ENCODE measurements at regions of chr12 and their contacts with region 1.

Region 1: GRCh38 chr12:46268590-46269558 is at the start of gene SLC38A1:
- DNase-seq: peak; percentile 88 to 96 (median 89)
- H3K4me3 ChIP-seq: peak within 1 kb of the TSS; percentile 91 to 96
- H3K4me3 Mint-ChIP-seq: no peak within 1 kb of the TSS
- H3K27ac ChIP-seq: peak within 1 kb of the TSS; percentile 95
- H3K27ac Mint-ChIP-seq: no peak within 1 kb of the TSS
- H3K4me1 ChIP-seq: peaks cover 54% of the 10 kb centered on the region
- H3K4me1 Mint-ChIP-seq: peaks cover 16 to 47% (median 23%) of the 10 kb centered on the region in 4 donors
- H3K27me3 ChIP-seq: no peaks in the 10 kb centered on the region
- H3K27me3 Mint-ChIP-seq: no peaks in the 10 kb centered on the region
- total RNA-seq, gene SLC38A1: 265 to 272 TPM

Region 2: DNA sequence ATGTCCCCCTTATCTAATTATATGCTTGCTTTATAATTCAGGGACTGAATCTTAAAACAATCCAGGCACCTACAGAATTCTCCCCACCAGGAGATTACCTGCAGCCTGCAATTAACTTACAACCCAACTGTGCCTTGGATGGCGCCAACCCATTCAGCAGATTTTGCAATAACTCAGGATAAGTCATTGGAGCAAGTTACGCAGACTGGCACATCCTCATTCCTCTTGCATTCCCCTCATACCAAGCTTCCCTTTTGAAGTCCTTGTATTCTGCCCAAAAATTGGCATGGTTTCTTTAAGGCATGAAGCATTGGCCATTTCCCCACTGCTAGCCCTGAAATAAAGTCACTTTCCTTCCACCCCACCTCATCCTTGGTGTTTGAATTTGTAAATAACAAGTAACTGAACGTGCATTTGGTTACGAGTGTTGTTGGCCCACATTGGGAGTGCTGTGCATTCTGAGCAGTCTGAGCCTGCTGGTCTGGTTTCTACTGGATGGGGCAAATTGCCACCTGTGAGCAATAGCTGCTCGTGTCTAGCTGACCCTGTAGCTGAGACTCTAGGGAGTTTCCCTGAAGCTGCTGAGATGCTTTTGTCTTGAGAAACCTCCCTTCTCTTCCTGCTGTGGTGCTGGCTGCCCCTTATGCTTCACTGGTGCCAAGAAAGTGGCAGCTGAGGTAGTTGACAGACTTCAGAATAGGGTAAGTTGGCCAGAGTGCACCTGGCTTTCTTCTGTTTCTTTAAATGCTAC is 179.3 kb before region 1 on chr12:
- CTCF ChIA-PET with region 1: no interaction called
- POLR2A ChIA-PET with region 1: no interaction called
- intact Hi-C with region 1: no loop called
- DNase-seq: no peak
- H3K4me3 ChIP-seq: no peak overlapping the region
- H3K4me3 Mint-ChIP-seq: no peak overlapping the region
- H3K27ac ChIP-seq: no peak overlapping the region
- H3K27ac Mint-ChIP-seq: peak overlapping the region in 1 of 7 donors; percentile 25
- H3K4me1 ChIP-seq: no peaks in the 10 kb centered on the region
- H3K4me1 Mint-ChIP-seq: no peaks in the 10 kb centered on the region
- H3K27me3 ChIP-seq: no peaks in the 10 kb centered on the region
- H3K27me3 Mint-ChIP-seq: peaks cover 20 to 30% of the 10 kb centered on the region in 2 donors

Region 3: DNA sequence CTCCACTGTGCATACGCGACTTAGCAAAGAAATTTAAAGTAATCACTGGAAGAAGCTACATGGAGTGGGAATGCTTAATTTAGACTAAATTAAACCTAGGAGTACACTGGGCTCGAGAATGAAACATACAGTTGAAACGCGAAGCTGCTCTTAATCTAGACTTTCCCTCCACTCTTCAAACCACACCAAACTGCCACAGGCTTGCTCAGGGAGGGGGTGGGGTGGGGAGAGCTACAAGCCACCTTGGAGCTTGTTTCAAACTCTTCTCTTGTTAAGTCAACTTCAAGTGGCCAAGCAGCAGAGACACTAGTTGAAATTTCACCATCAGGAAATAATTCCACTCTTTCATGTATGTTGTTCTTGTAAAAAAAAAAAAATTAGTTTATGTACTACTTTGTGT is 70.0 kb before region 1 on chr12:
- CTCF ChIA-PET with region 1: interaction called, 18 read pairs
- POLR2A ChIA-PET with region 1: interaction called, 118 read pairs
- intact Hi-C with region 1: no loop called
- DNase-seq: no peak
- H3K4me3 ChIP-seq: no peak overlapping the region
- H3K4me3 Mint-ChIP-seq: peak overlapping the region in 1 of 8 donors; percentile 22
- H3K27ac ChIP-seq: no peak overlapping the region
- H3K27ac Mint-ChIP-seq: peak overlapping the region in 5 of 7 donors; percentile 25 to 73 (median 62)
- H3K4me1 ChIP-seq: no peaks in the 10 kb centered on the region
- H3K4me1 Mint-ChIP-seq: peaks cover 5 to 14% (median 7%) of the 10 kb centered on the region in 4 donors
- H3K27me3 ChIP-seq: no peaks in the 10 kb centered on the region
- H3K27me3 Mint-ChIP-seq: no peaks in the 10 kb centered on the region

Region 4: GRCh38 chr12:46224386-46224785 is 44.5 kb before region 1 on chr12:
- CTCF ChIA-PET with region 1: interaction called, 30 read pairs
- POLR2A ChIA-PET with region 1: interaction called, 552 read pairs
- intact Hi-C with region 1: no loop called
- DNase-seq: no peak
- H3K4me3 ChIP-seq: no peak overlapping the region
- H3K4me3 Mint-ChIP-seq: peak overlapping the region in 5 of 8 donors; percentile 13 to 53 (median 23)
- H3K27ac ChIP-seq: no peak overlapping the region
- H3K27ac Mint-ChIP-seq: peak overlapping the region; percentile 4 to 96 (median 86)
- H3K4me1 ChIP-seq: peaks cover 81% of the 10 kb centered on the region
- H3K4me1 Mint-ChIP-seq: peaks cover 60 to 90% (median 70%) of the 10 kb centered on the region in 4 donors
- H3K27me3 ChIP-seq: no peaks in the 10 kb centered on the region
- H3K27me3 Mint-ChIP-seq: no peaks in the 10 kb centered on the region

Region 5: GRCh38 chr12:46253544-46254162 is 15.2 kb before region 1 on chr12:
- CTCF ChIA-PET with region 1: interaction called, 5 read pairs
- POLR2A ChIA-PET with region 1: interaction called, 23 read pairs
- intact Hi-C with region 1: loop called (anchors 1 kb)
- DNase-seq: no peak
- H3K4me3 ChIP-seq: no peak overlapping the region
- H3K4me3 Mint-ChIP-seq: peak overlapping the region in 1 of 8 donors; percentile 43
- H3K27ac ChIP-seq: no peak overlapping the region
- H3K27ac Mint-ChIP-seq: peak overlapping the region in 5 of 7 donors; percentile 30 to 76 (median 64)
- H3K4me1 ChIP-seq: peaks cover 68% of the 10 kb centered on the region
- H3K4me1 Mint-ChIP-seq: peaks cover 66 to 94% (median 79%) of the 10 kb centered on the region in 4 donors
- H3K27me3 ChIP-seq: no peaks in the 10 kb centered on the region
- H3K27me3 Mint-ChIP-seq: no peaks in the 10 kb centered on the region

Region 6: GRCh38 chr12:46372544-46373110 is 103.8 kb after region 1 on chr12 and contains the start of gene SLC38A2:
- CTCF ChIA-PET with region 1: no interaction called
- POLR2A ChIA-PET with region 1: interaction called, 77 read pairs
- intact Hi-C with region 1: loop called (anchors 1 kb)
- DNase-seq: peak; percentile 94 to 96 (median 95)
- H3K4me3 ChIP-seq: peak within 1 kb of the TSS; percentile 76 to 93
- H3K4me3 Mint-ChIP-seq: peak within 1 kb of the TSS; percentile 94 to 99 (median 96)
- H3K27ac ChIP-seq: peak within 1 kb of the TSS; percentile 88
- H3K27ac Mint-ChIP-seq: peak within 1 kb of the TSS; percentile 93 to 99 (median 99)
- H3K4me1 ChIP-seq: peaks cover 54% of the 10 kb centered on the region
- H3K4me1 Mint-ChIP-seq: peaks cover 39 to 68% (median 44%) of the 10 kb centered on the region in 4 donors
- H3K27me3 ChIP-seq: no peaks in the 10 kb centered on the region
- H3K27me3 Mint-ChIP-seq: peaks cover 0 to 6% of the 10 kb centered on the region in 2 donors
- total RNA-seq, gene SLC38A2: 200 to 208 TPM

Region 7: GRCh38 chr12:46442239-46442638 is 173.4 kb after region 1 on chr12:
- CTCF ChIA-PET with region 1: no interaction called
- POLR2A ChIA-PET with region 1: no interaction called
- intact Hi-C with region 1: no loop called
- DNase-seq: no peak
- H3K4me3 ChIP-seq: no peak overlapping the region
- H3K4me3 Mint-ChIP-seq: no peak overlapping the region
- H3K27ac ChIP-seq: no peak overlapping the region
- H3K27ac Mint-ChIP-seq: peak overlapping the region in 1 of 7 donors; percentile 52
- H3K4me1 ChIP-seq: no peaks in the 10 kb centered on the region
- H3K4me1 Mint-ChIP-seq: peaks cover 2 to 12% (median 4%) of the 10 kb centered on the region in 4 donors
- H3K27me3 ChIP-seq: no peaks in the 10 kb centered on the region
- H3K27me3 Mint-ChIP-seq: no peaks in the 10 kb centered on the region

Measured in CD4-positive, alpha-beta memory T cell (primary cell).